ENCODE measurements at regions of chr11 and their contacts with region 1.

Region 1: GRCh38 chr11:112555491-112556364 is 295.1 kb upstream of the PLET1 start:
- DNase-seq: peak; percentile 56 to 64 (median 60)
- H3K4me3 ChIP-seq: no peak overlapping the region
- H3K4me3 Mint-ChIP-seq: peak overlapping the region in 4 of 8 donors; percentile 20 to 63 (median 54)
- H3K27ac ChIP-seq: no peak overlapping the region
- H3K27ac Mint-ChIP-seq: peak overlapping the region in 3 of 7 donors; percentile 76 to 86 (median 83)
- H3K4me1 ChIP-seq: no peaks in the 10 kb centered on the region
- H3K4me1 Mint-ChIP-seq: peaks cover 0 to 6% (median 2%) of the 10 kb centered on the region in 4 donors
- H3K27me3 ChIP-seq: no peaks in the 10 kb centered on the region
- H3K27me3 Mint-ChIP-seq: peaks cover 3 to 4% of the 10 kb centered on the region in 2 donors

Region 2: GRCh38 chr11:112219476-112220232 is 336.1 kb before region 1 on chr11:
- CTCF ChIA-PET with region 1: interaction called, 12 read pairs
- POLR2A ChIA-PET with region 1: no interaction called
- intact Hi-C with region 1: loop called (anchors 1 kb)
- DNase-seq: peak; percentile 66 to 73 (median 71)
- H3K4me3 ChIP-seq: no peak overlapping the region
- H3K4me3 Mint-ChIP-seq: peak overlapping the region in 1 of 8 donors; percentile 13
- H3K27ac ChIP-seq: no peak overlapping the region
- H3K27ac Mint-ChIP-seq: peak overlapping the region in 3 of 7 donors; percentile 36 to 62 (median 42)
- H3K4me1 ChIP-seq: no peaks in the 10 kb centered on the region
- H3K4me1 Mint-ChIP-seq: peaks cover 0 to 5% (median 4%) of the 10 kb centered on the region in 4 donors
- H3K27me3 ChIP-seq: no peaks in the 10 kb centered on the region
- H3K27me3 Mint-ChIP-seq: no peaks in the 10 kb centered on the region

Region 3: DNA sequence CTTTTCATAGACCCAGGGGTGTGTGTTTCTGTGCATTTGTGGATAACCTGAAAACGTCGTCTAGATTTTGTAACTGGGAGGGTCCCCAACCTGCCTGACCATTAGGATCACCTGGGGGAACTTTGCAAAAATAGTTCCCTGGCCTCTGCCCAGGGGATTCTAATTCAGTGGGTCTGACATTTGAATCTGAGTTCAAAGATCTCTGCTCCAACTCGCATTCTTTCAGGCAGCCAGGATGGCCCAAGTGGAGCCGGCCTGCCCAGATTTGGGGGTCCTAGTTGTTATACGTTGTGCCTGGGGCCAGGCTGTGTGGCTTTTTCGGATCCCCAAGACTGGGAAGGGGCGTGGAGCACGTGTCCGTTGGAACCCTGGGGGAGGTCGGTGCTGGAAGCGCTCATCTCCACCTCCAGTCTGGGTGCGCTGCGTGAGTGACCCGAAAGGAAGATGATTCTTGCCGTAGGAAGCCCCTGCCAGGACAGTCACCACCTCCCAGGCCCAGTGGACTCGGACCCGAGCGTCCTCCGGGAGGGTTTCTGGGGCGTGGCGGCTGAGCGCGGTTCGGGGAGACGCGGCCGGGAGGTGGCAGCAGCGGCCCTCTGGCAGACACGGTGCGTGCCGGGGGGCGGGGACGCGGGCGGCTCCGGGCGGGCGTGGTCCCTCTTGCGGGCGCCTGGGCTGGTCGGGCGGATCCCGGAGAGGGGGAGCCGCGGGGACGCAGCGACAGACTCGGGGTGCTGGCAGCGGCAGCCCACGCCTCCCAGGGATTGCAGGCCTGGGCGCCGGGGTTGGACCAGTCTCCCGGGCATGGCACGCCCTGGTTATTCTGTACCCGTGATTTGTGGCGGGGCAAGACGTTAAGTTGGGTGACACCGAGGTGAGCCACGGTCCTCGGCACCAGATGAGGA is 265.9 kb before region 1 on chr11:
- CTCF ChIA-PET with region 1: interaction called, 78 read pairs
- POLR2A ChIA-PET with region 1: interaction called, 8 read pairs
- intact Hi-C with region 1: loop called (anchors 1 kb)
- DNase-seq: peak; percentile 83 to 87 (median 86)
- H3K4me3 ChIP-seq: peak overlapping the region in 1 of 2 donors; percentile 35
- H3K4me3 Mint-ChIP-seq: peak overlapping the region; percentile 74 to 90 (median 86)
- H3K27ac ChIP-seq: peak overlapping the region; percentile 50
- H3K27ac Mint-ChIP-seq: peak overlapping the region; percentile 43 to 88 (median 73)
- H3K4me1 ChIP-seq: peaks cover 19% of the 10 kb centered on the region
- H3K4me1 Mint-ChIP-seq: peaks cover 11 to 34% (median 23%) of the 10 kb centered on the region in 4 donors
- H3K27me3 ChIP-seq: no peaks in the 10 kb centered on the region
- H3K27me3 Mint-ChIP-seq: no peaks in the 10 kb centered on the region

Region 4: GRCh38 chr11:112421879-112422278 is 133.8 kb before region 1 on chr11:
- CTCF ChIA-PET with region 1: no interaction called
- POLR2A ChIA-PET with region 1: no interaction called
- intact Hi-C with region 1: no loop called
- DNase-seq: no peak
- H3K4me3 ChIP-seq: no peak overlapping the region
- H3K4me3 Mint-ChIP-seq: no peak overlapping the region
- H3K27ac ChIP-seq: no peak overlapping the region
- H3K27ac Mint-ChIP-seq: no peak overlapping the region
- H3K4me1 ChIP-seq: no peaks in the 10 kb centered on the region
- H3K4me1 Mint-ChIP-seq: peaks cover 0 to 10% (median 4%) of the 10 kb centered on the region in 4 donors
- H3K27me3 ChIP-seq: no peaks in the 10 kb centered on the region
- H3K27me3 Mint-ChIP-seq: peaks cover 1 to 6% of the 10 kb centered on the region in 2 donors

Region 5: GRCh38 chr11:112453601-112454577 is 101.8 kb before region 1 on chr11:
- CTCF ChIA-PET with region 1: interaction called, 12 read pairs
- POLR2A ChIA-PET with region 1: no interaction called
- intact Hi-C with region 1: no loop called
- DNase-seq: peak in 4 of 5 donors; percentile 5 to 13 (median 10)
- H3K4me3 ChIP-seq: no peak overlapping the region
- H3K4me3 Mint-ChIP-seq: no peak overlapping the region
- H3K27ac ChIP-seq: no peak overlapping the region
- H3K27ac Mint-ChIP-seq: no peak overlapping the region
- H3K4me1 ChIP-seq: no peaks in the 10 kb centered on the region
- H3K4me1 Mint-ChIP-seq: peaks cover 0 to 5% (median 3%) of the 10 kb centered on the region in 4 donors
- H3K27me3 ChIP-seq: no peaks in the 10 kb centered on the region
- H3K27me3 Mint-ChIP-seq: peaks cover 2 to 3% of the 10 kb centered on the region in 2 donors

Region 6: GRCh38 chr11:112541140-112541901 is 14.4 kb before region 1 on chr11:
- CTCF ChIA-PET with region 1: interaction called, 36 read pairs
- POLR2A ChIA-PET with region 1: interaction called, 7 read pairs
- intact Hi-C with region 1: no loop called
- DNase-seq: no peak
- H3K4me3 ChIP-seq: no peak overlapping the region
- H3K4me3 Mint-ChIP-seq: peak overlapping the region in 6 of 8 donors; percentile 3 to 51 (median 24)
- H3K27ac ChIP-seq: no peak overlapping the region
- H3K27ac Mint-ChIP-seq: peak overlapping the region in 5 of 7 donors; percentile 48 to 83 (median 66)
- H3K4me1 ChIP-seq: peaks cover 32% of the 10 kb centered on the region
- H3K4me1 Mint-ChIP-seq: peaks cover 18 to 63% (median 51%) of the 10 kb centered on the region in 4 donors
- H3K27me3 ChIP-seq: no peaks in the 10 kb centered on the region
- H3K27me3 Mint-ChIP-seq: peaks cover 2 to 8% of the 10 kb centered on the region in 2 donors